CD8-positive, alpha-beta T cell (primary cell): ENCODE measurements at regions of chr17 and their contacts with region 1.

Region 1: GRCh38 chr17:50626037-50626574 is 8.6 kb upstream of the ABCC3 start:
- DNase-seq: peak; percentile 30 to 75 (median 63)
- ATAC-seq: peak; percentile 67
- H3K4me3 ChIP-seq: no peak overlapping the region
- H3K4me3 Mint-ChIP-seq: no peak overlapping the region
- H3K27ac ChIP-seq: no peak overlapping the region
- H3K27ac Mint-ChIP-seq: no peak overlapping the region
- H3K4me1 ChIP-seq: no peaks in the 10 kb centered on the region
- H3K4me1 Mint-ChIP-seq: no peaks in the 10 kb centered on the region
- H3K27me3 ChIP-seq: peaks cover 5 to 13% of the 10 kb centered on the region in 2 experiments
- H3K27me3 Mint-ChIP-seq: peaks cover 42% of the 10 kb centered on the region
- CTCF ChIP-seq: peak; percentile 59

Region 2: DNA sequence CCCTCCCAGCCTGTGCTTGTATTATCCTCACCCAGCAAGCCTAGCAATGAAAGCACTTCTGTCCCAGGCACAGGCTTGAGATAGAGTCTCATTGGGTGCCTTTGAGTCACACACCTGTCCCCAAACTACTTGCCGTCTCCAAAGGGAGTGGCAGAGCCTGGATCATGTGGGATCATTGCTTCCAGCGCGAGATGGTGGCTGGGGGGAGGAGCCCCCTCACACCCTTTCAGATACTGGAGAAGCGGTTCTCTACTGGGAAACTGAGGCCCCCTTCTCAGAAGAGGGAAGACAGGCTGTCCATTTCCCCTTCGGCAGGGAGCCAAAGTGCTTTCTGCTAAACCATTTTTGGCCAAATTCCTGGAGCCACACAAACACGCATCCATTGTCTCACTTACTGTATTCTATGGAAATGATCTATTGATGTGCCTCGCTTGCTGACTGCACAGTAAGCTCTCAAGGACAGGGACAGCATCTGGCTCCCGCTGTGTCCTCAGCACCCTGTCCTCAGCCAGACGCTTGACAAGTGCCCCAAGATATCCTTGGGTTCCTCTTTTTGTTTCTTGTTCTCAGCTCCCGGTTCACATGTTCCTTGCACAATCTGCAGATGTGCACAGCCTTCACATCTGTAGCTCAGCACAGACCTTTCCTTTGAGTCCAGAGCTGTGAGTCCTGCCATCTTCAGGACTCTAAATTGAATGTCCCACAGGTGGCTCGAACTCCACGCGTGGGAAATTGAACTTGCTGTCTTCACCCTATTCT is 605.1 kb before region 1 on chr17:
- CTCF ChIA-PET with region 1: no interaction called
- POLR2A ChIA-PET with region 1: no interaction called
- intact Hi-C with region 1: no loop called
- DNase-seq: no peak
- ATAC-seq: no peak
- H3K4me3 ChIP-seq: no peak overlapping the region
- H3K4me3 Mint-ChIP-seq: no peak overlapping the region
- H3K27ac ChIP-seq: no peak overlapping the region
- H3K27ac Mint-ChIP-seq: no peak overlapping the region
- H3K4me1 ChIP-seq: no peaks in the 10 kb centered on the region
- H3K4me1 Mint-ChIP-seq: no peaks in the 10 kb centered on the region
- H3K27me3 ChIP-seq: no peaks in the 10 kb centered on the region
- H3K27me3 Mint-ChIP-seq: peaks cover 19% of the 10 kb centered on the region
- CTCF ChIP-seq: no peak

Region 3: GRCh38 chr17:50304781-50305404 is 321.2 kb before region 1 on chr17:
- CTCF ChIA-PET with region 1: no interaction called
- POLR2A ChIA-PET with region 1: no interaction called
- intact Hi-C with region 1: no loop called
- DNase-seq: no peak
- ATAC-seq: no peak
- H3K4me3 ChIP-seq: no peak overlapping the region
- H3K4me3 Mint-ChIP-seq: no peak overlapping the region
- H3K27ac ChIP-seq: no peak overlapping the region
- H3K27ac Mint-ChIP-seq: no peak overlapping the region
- H3K4me1 ChIP-seq: no peaks in the 10 kb centered on the region
- H3K4me1 Mint-ChIP-seq: no peaks in the 10 kb centered on the region
- H3K27me3 ChIP-seq: no peaks in the 10 kb centered on the region
- H3K27me3 Mint-ChIP-seq: peaks cover 7% of the 10 kb centered on the region
- CTCF ChIP-seq: no peak

Region 4: GRCh38 chr17:50570528-50570927 is 55.6 kb before region 1 on chr17:
- CTCF ChIA-PET with region 1: no interaction called
- POLR2A ChIA-PET with region 1: no interaction called
- intact Hi-C with region 1: no loop called
- DNase-seq: no peak
- ATAC-seq: no peak
- H3K4me3 ChIP-seq: no peak overlapping the region
- H3K4me3 Mint-ChIP-seq: no peak overlapping the region
- H3K27ac ChIP-seq: no peak overlapping the region
- H3K27ac Mint-ChIP-seq: no peak overlapping the region
- H3K4me1 ChIP-seq: no peaks in the 10 kb centered on the region
- H3K4me1 Mint-ChIP-seq: peaks cover 2% of the 10 kb centered on the region
- H3K27me3 ChIP-seq: peaks cover 0 to 1% of the 10 kb centered on the region in 2 experiments
- H3K27me3 Mint-ChIP-seq: peaks cover 34% of the 10 kb centered on the region
- CTCF ChIP-seq: no peak

Region 5: DNA sequence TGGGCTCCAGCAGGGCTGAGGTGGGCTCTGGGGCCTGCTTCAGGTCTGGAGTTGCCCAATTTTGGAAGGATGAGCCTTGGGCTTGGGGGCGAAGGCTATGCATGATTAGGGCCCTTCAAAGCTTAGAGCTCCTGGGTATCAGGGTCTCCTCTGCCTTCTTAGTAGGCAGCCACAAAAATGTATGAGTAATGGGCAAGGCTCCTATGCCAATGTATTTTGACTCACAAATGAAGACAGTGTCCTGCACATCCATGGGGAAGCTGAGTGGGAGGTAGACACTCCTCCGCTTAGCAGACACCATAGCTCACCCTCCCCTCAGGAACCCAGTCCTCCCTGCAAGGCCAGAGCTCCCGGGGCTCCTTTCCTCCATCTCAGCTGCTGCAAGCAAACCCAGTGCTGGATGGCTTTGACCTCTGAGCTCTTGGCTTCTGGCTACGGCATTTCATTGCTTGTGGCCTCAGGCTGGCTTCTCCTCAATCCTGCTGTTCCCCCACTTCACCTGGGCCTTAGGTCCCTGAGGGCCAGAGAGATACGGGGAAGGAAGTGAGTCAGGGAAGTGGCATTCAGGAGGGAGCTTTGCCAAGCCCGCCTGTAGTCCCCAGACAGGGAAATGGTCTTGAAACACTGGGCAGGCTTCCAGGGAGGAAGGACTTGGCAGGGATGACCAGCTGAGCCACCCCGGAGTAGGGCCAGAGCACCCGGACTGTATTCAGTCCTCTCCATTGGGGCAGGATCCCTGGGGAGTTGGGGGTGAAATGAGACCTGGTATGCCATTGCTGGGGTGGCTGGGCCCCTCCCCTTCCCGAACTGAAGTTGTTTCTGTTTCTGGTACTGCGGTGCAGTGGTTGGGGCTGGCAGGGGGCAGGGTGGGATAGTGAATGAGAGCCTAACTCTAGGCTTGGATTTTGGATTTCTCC is 13.0 kb after region 1 on chr17:
- CTCF ChIA-PET with region 1: interaction called, 53 read pairs
- POLR2A ChIA-PET with region 1: no interaction called
- intact Hi-C with region 1: no loop called
- DNase-seq: no peak
- ATAC-seq: no peak
- H3K4me3 ChIP-seq: no peak overlapping the region
- H3K4me3 Mint-ChIP-seq: no peak overlapping the region
- H3K27ac ChIP-seq: no peak overlapping the region
- H3K27ac Mint-ChIP-seq: no peak overlapping the region
- H3K4me1 ChIP-seq: peaks cover 5% of the 10 kb centered on the region
- H3K4me1 Mint-ChIP-seq: no peaks in the 10 kb centered on the region
- H3K27me3 ChIP-seq: peaks cover 0 to 15% of the 10 kb centered on the region in 2 experiments
- H3K27me3 Mint-ChIP-seq: peaks cover 37% of the 10 kb centered on the region
- CTCF ChIP-seq: no peak

Region 6: DNA sequence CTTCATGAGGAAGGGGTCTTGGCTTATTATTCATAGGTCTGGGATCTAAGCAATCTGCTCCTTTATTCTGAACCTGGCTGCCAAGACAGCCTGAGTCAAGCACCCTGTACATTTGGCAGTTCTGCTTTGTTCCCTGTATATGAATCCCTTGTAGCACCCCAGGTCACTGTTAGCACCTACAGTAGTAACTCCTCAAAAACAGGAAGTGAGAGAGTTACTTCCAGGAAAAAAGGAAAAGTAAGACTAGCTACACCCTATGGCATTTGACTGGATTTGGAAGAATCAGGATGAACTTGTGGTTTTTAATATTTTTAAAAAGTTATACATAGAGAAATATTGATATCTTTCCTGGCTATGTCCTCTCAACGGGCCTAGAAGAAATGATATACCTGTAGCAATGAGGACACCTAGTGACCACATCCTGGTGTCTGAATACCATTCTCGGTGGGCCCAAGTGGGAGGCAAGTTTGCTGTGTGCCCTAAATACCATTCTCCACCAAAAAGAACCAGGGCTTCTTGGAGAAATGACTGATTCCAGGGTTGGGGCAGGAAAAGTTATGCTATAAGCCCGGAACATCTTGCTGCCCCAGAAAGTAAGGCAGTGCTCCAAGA is 71.7 kb after region 1 on chr17:
- CTCF ChIA-PET with region 1: interaction called, 7 read pairs
- POLR2A ChIA-PET with region 1: no interaction called
- intact Hi-C with region 1: loop called in 1 of 2 experiments (anchors 5 kb)
- DNase-seq: peak in 1 of 9 experiments; percentile 28
- ATAC-seq: no peak
- H3K4me3 ChIP-seq: no peak overlapping the region
- H3K4me3 Mint-ChIP-seq: no peak overlapping the region
- H3K27ac ChIP-seq: no peak overlapping the region
- H3K27ac Mint-ChIP-seq: peak overlapping the region; percentile 39
- H3K4me1 ChIP-seq: no peaks in the 10 kb centered on the region
- H3K4me1 Mint-ChIP-seq: peaks cover 19% of the 10 kb centered on the region
- H3K27me3 ChIP-seq: no peaks in the 10 kb centered on the region
- H3K27me3 Mint-ChIP-seq: no peaks in the 10 kb centered on the region
- CTCF ChIP-seq: no peak

Region 7: GRCh38 chr17:50841949-50842354 is 215.8 kb after region 1 on chr17:
- CTCF ChIA-PET with region 1: interaction called, 3 read pairs
- POLR2A ChIA-PET with region 1: no interaction called
- intact Hi-C with region 1: loop called in 1 of 2 experiments (anchors 1 kb)
- DNase-seq: peak in 8 of 9 experiments; percentile 21 to 67 (median 51)
- ATAC-seq: peak; percentile 69
- H3K4me3 ChIP-seq: no peak overlapping the region
- H3K4me3 Mint-ChIP-seq: no peak overlapping the region
- H3K27ac ChIP-seq: no peak overlapping the region
- H3K27ac Mint-ChIP-seq: no peak overlapping the region
- H3K4me1 ChIP-seq: no peaks in the 10 kb centered on the region
- H3K4me1 Mint-ChIP-seq: no peaks in the 10 kb centered on the region
- H3K27me3 ChIP-seq: no peaks in the 10 kb centered on the region
- H3K27me3 Mint-ChIP-seq: no peaks in the 10 kb centered on the region
- CTCF ChIP-seq: peak; percentile 62

Region 8: GRCh38 chr17:50908860-50909764 is 283.0 kb after region 1 on chr17:
- CTCF ChIA-PET with region 1: no interaction called
- POLR2A ChIA-PET with region 1: no interaction called
- intact Hi-C with region 1: no loop called
- DNase-seq: peak; percentile 25 to 85 (median 68)
- ATAC-seq: peak; percentile 54
- H3K4me3 ChIP-seq: peak overlapping the region in 1 of 2 experiments; percentile 24
- H3K4me3 Mint-ChIP-seq: peak overlapping the region; percentile 50
- H3K27ac ChIP-seq: peak overlapping the region; percentile 83 to 92
- H3K27ac Mint-ChIP-seq: peak overlapping the region; percentile 93
- H3K4me1 ChIP-seq: peaks cover 74% of the 10 kb centered on the region
- H3K4me1 Mint-ChIP-seq: peaks cover 60% of the 10 kb centered on the region
- H3K27me3 ChIP-seq: no peaks in the 10 kb centered on the region
- H3K27me3 Mint-ChIP-seq: no peaks in the 10 kb centered on the region
- CTCF ChIP-seq: peak; percentile 29